HepG2 (cell line): ENCODE measurements at regions of chr10 and their contacts with region 1.

Region 1: GRCh38 chr10:28381903-28382347 is 79.1 kb upstream of the MPP7 start:
- DNase-seq: peak; percentile 88
- ATAC-seq: peak; percentile 91
- H3K4me3 ChIP-seq: no peak overlapping the region
- H3K27ac ChIP-seq: no peak overlapping the region
- H3K4me1 ChIP-seq: peaks cover 44% of the 10 kb centered on the region
- H3K27me3 ChIP-seq: no peaks in the 10 kb centered on the region; a peak in 1 of 5 replicates
- CTCF ChIP-seq: peak; percentile 95
- EP300 ChIP-seq: peak in 1 of 2 experiments; percentile 38; a peak in 1 of 4 replicates
- POLR2A ChIP-seq: no peak
- RAD21 ChIP-seq: peak; percentile 96

Region 2: DNA sequence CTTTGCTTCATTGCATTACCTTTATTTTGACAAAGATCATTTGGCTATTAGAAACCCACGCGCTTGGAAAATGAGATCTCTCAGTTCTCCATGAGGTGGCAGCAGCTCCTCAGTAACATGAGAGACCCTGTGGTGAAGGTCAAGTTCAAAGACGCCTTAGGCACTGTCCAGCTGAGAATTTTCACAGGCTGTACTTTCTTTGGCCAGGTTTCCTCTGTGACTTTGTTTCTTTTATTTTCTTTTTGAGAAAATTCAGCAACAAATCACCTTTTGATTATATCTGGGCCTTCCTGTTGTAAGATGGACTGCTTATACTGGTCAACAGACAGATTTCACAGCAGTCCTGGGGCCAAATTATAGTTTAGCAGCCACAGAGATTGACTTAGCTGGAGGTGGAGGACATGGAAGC is 823.3 kb before region 1 on chr10:
- CTCF ChIA-PET with region 1: no interaction called
- POLR2A ChIA-PET with region 1: no interaction called
- in situ Hi-C with region 1: loop called (anchors 25 kb)
- intact Hi-C with region 1: loop called (anchors 5 kb)
- DNase-seq: peak; percentile 68
- ATAC-seq: peak; percentile 69
- H3K4me3 ChIP-seq: no peak overlapping the region
- H3K27ac ChIP-seq: no peak overlapping the region
- H3K4me1 ChIP-seq: no peaks in the 10 kb centered on the region
- H3K27me3 ChIP-seq: no peaks in the 10 kb centered on the region
- CTCF ChIP-seq: peak; percentile 81
- EP300 ChIP-seq: no peak
- POLR2A ChIP-seq: no peak
- RAD21 ChIP-seq: peak; percentile 74

Region 3: GRCh38 chr10:27783660-27784059 is 598.3 kb before region 1 on chr10:
- CTCF ChIA-PET with region 1: no interaction called
- POLR2A ChIA-PET with region 1: no interaction called
- in situ Hi-C with region 1: no loop called
- intact Hi-C with region 1: loop called (anchors 2 kb)
- DNase-seq: peak; percentile 23
- ATAC-seq: peak; percentile 79
- H3K4me3 ChIP-seq: no peak overlapping the region
- H3K27ac ChIP-seq: no peak overlapping the region
- H3K4me1 ChIP-seq: no peaks in the 10 kb centered on the region
- H3K27me3 ChIP-seq: peaks cover 0 to 8% of the 10 kb centered on the region in 2 experiments; a peak in 1 of 5 replicates
- CTCF ChIP-seq: peak; percentile 49
- EP300 ChIP-seq: no peak
- POLR2A ChIP-seq: no peak
- RAD21 ChIP-seq: no peak

Region 4: GRCh38 chr10:28250782-28251181 is 131.1 kb before region 1 on chr10:
- CTCF ChIA-PET with region 1: interaction called, 66 read pairs
- POLR2A ChIA-PET with region 1: interaction called, 4 read pairs
- in situ Hi-C with region 1: no loop called
- intact Hi-C with region 1: loop called (anchors 1 kb)
- DNase-seq: peak; percentile 29
- ATAC-seq: no peak
- H3K4me3 ChIP-seq: no peak overlapping the region
- H3K27ac ChIP-seq: no peak overlapping the region
- H3K4me1 ChIP-seq: no peaks in the 10 kb centered on the region
- H3K27me3 ChIP-seq: no peaks in the 10 kb centered on the region
- CTCF ChIP-seq: peak; percentile 49
- EP300 ChIP-seq: no peak
- POLR2A ChIP-seq: no peak
- RAD21 ChIP-seq: peak; percentile 51

Region 5: DNA sequence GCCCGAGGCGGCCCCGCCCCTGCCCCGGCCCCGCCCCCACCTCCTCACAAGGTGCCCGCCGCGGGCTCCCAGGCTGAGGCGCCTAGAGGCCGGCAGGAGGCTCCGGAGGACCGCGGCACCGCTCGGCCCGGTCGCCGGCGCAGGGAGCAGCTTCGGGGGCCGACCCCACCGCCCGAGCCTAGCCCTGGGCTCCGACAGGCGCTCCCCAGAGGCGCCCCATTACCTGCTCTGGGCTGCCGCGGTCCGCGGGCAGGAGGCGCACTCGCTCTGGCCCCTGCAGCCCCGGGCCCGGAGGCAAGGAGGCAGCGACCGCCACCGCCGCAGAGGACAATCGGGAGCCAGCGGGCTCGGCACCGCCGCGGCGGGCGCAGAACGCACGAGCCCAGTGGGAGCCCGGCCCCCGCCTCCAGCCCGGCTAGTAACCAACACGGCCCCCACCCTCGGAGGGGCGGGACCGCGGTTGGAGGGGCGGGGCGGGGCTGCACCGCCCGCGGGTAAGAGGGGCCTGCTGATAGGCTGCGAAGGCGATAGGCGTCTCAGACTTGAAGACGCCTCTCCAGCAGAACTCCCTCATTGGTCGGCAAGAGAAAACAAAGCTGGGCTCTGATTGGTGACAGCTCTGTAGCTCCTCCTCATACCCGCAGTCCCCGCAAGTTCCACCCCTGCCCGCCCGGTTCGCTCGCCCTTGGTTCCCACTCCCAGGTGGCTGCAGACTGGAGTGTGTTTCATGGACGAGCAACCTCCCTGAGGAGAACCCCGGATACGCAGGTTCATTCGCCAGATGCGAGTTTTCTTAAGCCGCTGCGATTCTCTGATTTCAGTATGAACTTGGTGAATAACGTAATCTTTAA is 79.1 kb before region 1 on chr10 and contains the start of gene MPP7:
- CTCF ChIA-PET with region 1: interaction called, 14 read pairs
- POLR2A ChIA-PET with region 1: interaction called, 30 read pairs
- in situ Hi-C with region 1: no loop called
- intact Hi-C with region 1: loop called (anchors 1 kb)
- DNase-seq: peak; percentile 98
- ATAC-seq: peak; percentile 96
- H3K4me3 ChIP-seq: peak within 1 kb of the TSS; percentile 72 to 85 (median 81)
- H3K27ac ChIP-seq: peak within 1 kb of the TSS; percentile 90
- H3K4me1 ChIP-seq: peaks cover 45% of the 10 kb centered on the region
- H3K27me3 ChIP-seq: no peaks in the 10 kb centered on the region
- CTCF ChIP-seq: peak; percentile 55; the same call in 1 of the 2 replicates
- EP300 ChIP-seq: no peak
- POLR2A ChIP-seq: peak; percentile 70 to 73
- RAD21 ChIP-seq: peak; percentile 92
- total RNA-seq, gene MPP7: 16.4 and 23.8 TPM in 2 replicates

Region 6: DNA sequence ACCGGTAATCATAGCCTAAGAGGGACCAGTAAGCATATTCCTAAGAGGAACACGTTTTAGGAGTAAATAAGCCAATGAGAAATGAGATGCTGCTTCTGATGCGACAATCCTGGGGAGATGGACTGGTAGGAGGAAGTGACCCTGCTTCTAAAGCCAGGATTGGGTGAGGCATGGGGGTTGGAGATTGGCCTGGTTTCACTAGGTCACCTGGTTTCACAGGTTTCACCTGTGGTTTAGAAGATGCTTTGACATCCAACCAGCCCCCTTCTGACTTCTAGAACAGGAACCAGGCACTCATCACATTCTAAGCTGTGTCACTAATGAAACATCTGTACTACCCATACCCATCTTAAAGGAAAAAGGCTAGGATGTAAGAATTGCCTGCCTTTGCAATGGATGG is 242.4 kb after region 1 on chr10:
- CTCF ChIA-PET with region 1: no interaction called
- POLR2A ChIA-PET with region 1: no interaction called
- in situ Hi-C with region 1: no loop called
- intact Hi-C with region 1: no loop called
- DNase-seq: no peak
- ATAC-seq: no peak; the same call in 2 of the 3 replicates
- H3K4me3 ChIP-seq: no peak overlapping the region
- H3K27ac ChIP-seq: no peak overlapping the region
- H3K4me1 ChIP-seq: no peaks in the 10 kb centered on the region; the same call in 1 of the 2 replicates
- H3K27me3 ChIP-seq: peaks cover 0 to 4% of the 10 kb centered on the region in 2 experiments; a peak in 1 of 5 replicates
- CTCF ChIP-seq: no peak
- EP300 ChIP-seq: no peak
- POLR2A ChIP-seq: 0 out of 4 replicates have a peak, but pooled peaks of 1 of the 2 experiments have one; percentile 26
- RAD21 ChIP-seq: no peak